ENCODE measurements at regions of chr19 and their contacts with region 1.

Region 1: DNA sequence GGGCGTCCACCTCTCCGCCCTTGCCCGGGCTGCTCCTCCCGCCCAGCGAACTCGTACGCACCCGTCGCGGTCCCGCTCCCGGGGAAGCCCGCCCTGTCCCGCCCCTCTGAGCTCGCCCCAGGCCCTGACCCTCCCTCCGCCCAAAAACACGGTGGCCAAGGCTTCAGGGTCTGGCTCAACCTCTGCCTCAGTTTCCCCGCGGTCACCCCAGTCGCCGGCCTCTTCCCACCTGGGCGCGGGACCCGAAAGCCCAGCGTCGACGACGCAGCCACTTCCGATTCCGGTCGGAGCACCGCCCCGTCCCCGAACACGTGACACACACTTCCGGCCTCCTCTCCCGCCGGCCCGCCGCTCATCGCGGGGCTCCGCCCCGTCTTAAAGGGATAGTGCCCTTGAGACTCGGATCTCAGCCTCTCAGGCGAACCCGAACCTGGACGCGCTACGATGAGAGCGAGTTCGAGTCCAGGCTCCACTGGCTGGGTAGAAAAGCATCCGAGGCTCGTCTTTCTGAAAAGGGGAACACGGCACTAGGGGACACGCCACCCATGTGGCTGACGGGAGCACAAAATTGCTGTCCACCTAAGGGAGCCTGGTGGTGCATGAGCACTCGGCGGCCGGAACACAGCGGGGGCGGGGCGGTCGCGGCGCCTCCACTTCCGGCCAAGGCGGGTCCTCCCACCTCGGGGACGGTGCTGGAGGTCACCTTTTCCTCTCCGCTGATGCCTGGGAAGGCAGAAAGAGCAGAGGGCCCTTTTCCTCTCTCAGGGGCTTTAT is at the start of gene C19orf25:
- DNase-seq: peak; percentile 92
- H3K4me3 Mint-ChIP-seq: peak within 1 kb of the TSS; percentile 96
- H3K27ac Mint-ChIP-seq: peak within 1 kb of the TSS; percentile 97
- H3K4me1 Mint-ChIP-seq: peaks cover 12% of the 10 kb centered on the region
- H3K27me3 Mint-ChIP-seq: no peaks in the 10 kb centered on the region
- total RNA-seq, gene C19orf25: 37.1 and 38.5 TPM in 2 replicates

Region 2: DNA sequence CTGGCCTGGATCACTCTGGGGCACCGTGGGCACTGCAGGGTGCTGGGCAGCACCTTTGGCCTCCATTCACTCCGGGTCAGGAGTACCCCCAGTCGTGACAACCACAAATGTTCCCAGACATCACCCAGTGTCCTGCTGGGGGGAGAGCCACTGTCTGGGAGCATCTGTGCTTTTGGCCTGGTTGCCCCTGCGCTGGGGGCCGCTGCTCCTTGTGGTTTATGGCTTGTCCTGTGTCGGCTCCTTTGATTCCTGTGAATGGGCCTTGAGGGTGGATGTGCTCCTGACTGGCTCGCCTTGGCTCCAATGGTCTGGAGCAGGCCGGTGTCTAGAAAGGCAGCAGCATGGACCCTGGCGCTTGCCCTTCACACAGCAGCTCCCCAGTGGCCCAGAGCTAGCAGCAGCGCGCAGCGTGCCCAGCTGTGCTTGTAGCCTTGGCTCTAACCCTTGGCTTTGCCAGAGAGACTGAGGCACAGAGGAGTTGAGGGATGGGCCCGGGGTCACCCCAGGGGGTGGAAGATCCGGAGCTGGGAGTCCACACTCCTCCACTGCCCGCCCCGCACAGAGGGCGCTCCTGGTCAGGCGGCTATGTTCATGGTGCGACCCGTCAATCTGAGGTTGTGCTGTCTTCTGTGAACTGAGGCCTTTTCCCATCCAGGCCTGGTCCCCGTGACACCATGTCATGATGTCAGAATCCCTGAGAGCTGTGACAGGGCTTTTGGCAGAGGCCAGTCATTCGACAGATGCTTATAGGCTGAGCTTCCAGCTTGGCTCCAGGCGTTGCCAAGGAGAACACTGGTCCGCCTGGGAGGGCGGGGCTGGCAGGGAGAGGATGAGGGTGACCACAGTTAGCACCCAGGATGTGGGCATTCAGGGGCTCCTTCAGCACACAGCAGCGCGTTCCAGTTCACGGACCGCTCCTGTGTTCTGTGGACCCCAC is 67.6 kb before region 1 on chr19:
- intact Hi-C with region 1: no loop called
- DNase-seq: no peak
- H3K4me3 Mint-ChIP-seq: peak overlapping the region; percentile 33
- H3K27ac Mint-ChIP-seq: no peak overlapping the region
- H3K4me1 Mint-ChIP-seq: peaks cover 37% of the 10 kb centered on the region
- H3K27me3 Mint-ChIP-seq: no peaks in the 10 kb centered on the region

Region 3: DNA sequence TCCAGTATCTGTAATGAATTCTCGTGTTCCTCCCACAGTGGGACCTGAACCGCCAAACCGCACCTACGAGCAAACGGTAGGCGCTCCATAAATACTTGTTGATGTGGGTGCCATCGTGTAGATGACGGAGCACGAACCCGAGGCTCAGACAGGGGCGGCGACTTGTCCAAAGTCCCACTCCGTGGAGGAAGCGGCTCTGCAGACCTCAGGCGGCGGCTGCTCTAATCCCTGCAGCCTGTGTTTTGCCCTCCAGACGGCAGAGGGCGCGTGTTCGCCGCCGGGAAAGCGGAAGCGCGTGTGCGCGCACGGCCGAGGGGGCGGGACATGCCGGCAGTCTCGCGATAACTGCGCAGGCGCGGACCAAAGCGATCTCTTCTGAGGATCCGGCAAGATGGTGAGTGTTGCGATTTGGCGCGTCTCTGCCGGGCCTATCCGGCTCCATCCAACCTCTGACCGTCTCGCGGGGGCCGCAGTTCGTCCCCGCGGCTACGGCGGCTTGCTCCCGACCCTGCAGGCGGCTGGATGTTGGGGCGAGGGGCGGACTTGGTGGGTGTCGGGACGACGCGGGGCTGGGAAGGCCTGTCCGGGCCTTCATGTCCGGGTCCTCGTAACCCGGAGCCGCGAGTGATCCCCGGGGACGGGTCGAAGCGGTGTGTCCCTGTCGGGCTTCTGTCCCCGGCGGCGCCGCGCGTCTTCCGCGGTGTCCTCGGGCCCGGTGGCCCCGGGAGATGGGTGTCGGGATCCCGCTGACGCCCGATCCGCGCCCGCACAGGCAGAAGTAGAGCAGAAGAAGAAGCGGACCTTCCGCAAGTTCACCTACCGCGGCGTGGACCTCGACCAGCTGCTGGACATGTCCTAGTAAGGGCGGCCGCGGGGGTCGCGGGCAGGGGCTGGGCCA is 40.8 kb before region 1 on chr19 and contains the start of gene RPS15:
- intact Hi-C with region 1: loop called (anchors 2 kb)
- DNase-seq: peak; percentile 95
- H3K4me3 Mint-ChIP-seq: peak within 1 kb of the TSS; percentile 98
- H3K27ac Mint-ChIP-seq: peak within 1 kb of the TSS; percentile 99
- H3K4me1 Mint-ChIP-seq: no peaks in the 10 kb centered on the region
- H3K27me3 Mint-ChIP-seq: no peaks in the 10 kb centered on the region
- total RNA-seq, gene RPS15: 1,387 and 1,455 TPM in 2 replicates

Region 4: GRCh38 chr19:1507763-1508509 is 28.8 kb after region 1 on chr19:
- intact Hi-C with region 1: loop called (anchors 1 kb)
- DNase-seq: peak; percentile 82
- H3K4me3 Mint-ChIP-seq: peak overlapping the region; percentile 80
- H3K27ac Mint-ChIP-seq: peak overlapping the region; percentile 77
- H3K4me1 Mint-ChIP-seq: peaks cover 6% of the 10 kb centered on the region
- H3K27me3 Mint-ChIP-seq: peaks cover 22% of the 10 kb centered on the region

Region 5: GRCh38 chr19:1513499-1514294 is 34.6 kb after region 1 on chr19:
- intact Hi-C with region 1: loop called (anchors 1 kb)
- DNase-seq: peak; percentile 57
- H3K4me3 Mint-ChIP-seq: no peak overlapping the region
- H3K27ac Mint-ChIP-seq: no peak overlapping the region
- H3K4me1 Mint-ChIP-seq: no peaks in the 10 kb centered on the region
- H3K27me3 Mint-ChIP-seq: peaks cover 12% of the 10 kb centered on the region